Left colon (tissue), 2 donors: ENCODE measurements at regions of chr3 and their contacts with region 1.

Region 1: DNA sequence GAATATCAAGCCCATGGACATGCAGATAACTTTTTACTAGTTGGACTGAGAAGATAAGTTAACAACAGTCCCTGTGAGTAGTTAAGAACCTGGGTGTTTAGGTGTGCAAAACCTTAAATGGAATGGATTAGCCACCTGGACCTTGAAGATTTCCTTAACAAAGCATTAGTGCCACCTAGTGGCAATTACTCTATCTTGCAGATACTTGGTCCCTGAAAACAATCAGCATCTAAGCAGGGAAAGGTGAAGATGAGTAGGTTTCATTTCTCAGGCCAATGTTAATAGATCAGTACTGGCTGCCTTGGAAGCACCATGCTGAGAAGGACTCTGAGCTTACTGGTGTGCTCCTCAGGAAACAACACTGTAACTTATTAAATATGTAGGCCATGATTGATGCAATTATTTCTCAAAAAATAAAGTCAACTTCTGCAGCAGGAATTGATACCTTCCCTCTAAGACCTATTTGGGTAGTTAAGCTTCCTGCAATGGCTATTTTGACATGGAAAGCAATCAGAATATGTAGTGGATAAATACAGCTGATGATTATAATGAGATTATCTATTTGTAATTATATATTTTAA is 329.4 kb downstream of the TBC1D5 start:
- DNase-seq: no peak
- ATAC-seq: peak; percentile 73

Region 2: DNA sequence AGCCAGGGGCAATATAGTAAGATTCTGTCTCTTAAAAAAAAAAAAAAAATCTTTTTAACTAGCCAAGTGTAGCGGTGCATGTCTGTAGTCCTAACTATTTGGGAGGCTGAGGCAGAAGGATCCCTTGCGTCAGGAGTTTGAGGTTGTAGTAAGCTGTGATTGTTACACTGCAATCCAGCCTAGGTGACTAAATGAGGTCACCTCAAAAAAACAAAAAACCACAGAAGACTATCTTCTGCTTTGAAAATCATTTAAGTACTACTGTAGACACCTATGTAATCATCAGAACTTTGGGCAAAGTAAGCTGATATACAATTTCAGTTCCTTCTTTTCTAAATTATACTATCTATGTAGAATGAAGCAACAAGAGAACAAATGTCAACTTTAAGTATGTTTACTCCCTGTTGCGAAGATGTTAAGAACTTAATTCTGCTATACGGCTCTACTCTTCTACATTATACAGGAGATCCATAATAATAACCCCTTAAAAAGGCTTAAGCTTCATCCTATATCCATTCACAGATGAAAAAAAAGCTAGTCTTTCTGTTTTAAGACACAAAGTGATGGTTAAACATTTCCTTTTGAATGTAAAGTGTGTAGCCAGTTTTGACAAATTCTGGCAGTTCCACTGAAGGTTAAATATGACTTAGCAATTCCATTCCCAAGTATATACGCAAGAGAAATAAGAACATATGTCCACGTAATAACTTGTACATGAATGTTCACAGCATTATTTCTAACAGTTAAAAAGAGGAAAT is 823.0 kb before region 1 on chr3:
- intact Hi-C with region 1: loop called in 1 of 2 experiments (anchors 10 kb)
- DNase-seq: no peak
- ATAC-seq: no peak

Region 3: DNA sequence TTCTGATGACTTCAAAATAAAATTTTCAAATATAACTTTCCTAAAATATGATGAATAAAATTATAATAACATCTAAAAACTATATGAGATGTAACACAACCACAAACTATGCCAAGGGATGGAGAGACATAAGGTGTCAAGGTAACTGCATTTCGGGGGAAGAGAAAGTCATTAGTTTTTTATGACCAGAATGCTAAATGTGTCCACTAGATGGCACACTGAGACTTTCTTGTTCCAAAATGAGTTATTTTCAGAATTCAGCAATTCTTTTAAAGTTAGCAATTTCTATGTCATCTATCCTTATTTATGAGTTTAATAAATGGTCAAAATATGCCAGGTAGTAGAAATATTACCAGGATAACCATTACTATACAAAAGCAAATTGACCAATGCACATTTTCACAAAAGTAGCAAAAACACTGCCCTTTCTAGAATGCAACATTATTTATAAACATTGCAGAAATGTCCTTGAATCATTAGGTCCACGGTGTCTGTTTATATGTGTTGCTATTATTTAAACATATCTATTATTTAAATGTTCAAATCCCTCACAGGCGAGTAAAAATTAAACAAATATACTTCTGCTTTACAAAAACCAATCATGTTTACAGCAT is 154.1 kb before region 1 on chr3:
- intact Hi-C with region 1: loop called in 1 of 2 experiments (anchors 5 kb)
- DNase-seq: no peak
- ATAC-seq: no peak